Heart left ventricle (tissue), 16 donors: ENCODE measurements at regions of chr22 and their contacts with region 1.

Region 1: DNA sequence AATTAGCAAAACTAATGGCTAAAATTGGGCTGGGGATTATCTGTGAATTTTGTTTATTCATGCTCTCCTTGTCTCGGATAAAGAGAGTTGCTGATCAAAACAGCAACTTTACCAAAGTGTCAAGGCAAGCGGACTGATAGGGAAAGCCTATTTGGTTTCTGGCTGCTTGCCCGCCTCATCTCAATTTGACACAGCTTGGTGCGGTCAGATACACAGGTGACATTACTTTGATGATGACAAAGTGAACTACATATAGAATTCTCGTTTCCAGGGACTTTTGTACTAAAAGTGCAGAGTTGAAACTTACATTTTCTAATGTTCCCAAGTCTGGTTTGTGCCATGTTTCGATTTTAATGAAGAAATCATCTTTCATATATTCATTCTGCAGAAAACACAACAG is 22.8 kb downstream of the PITPNB start:
- DNase-seq: peak in 1 of 5 donors; percentile 42
- ATAC-seq: peak in 1 of 4 donors; percentile 53
- H3K4me3 ChIP-seq: no peak overlapping the region
- H3K27ac ChIP-seq: peak overlapping the region in 1 of 12 donors; percentile 30
- H3K4me1 ChIP-seq: peaks cover 0 to 45% (median 7%) of the 10 kb centered on the region in 12 donors
- H3K27me3 ChIP-seq: no peaks in the 10 kb centered on the region
- CTCF ChIP-seq: no peak
- POLR2A ChIP-seq: no peak

Region 2: DNA sequence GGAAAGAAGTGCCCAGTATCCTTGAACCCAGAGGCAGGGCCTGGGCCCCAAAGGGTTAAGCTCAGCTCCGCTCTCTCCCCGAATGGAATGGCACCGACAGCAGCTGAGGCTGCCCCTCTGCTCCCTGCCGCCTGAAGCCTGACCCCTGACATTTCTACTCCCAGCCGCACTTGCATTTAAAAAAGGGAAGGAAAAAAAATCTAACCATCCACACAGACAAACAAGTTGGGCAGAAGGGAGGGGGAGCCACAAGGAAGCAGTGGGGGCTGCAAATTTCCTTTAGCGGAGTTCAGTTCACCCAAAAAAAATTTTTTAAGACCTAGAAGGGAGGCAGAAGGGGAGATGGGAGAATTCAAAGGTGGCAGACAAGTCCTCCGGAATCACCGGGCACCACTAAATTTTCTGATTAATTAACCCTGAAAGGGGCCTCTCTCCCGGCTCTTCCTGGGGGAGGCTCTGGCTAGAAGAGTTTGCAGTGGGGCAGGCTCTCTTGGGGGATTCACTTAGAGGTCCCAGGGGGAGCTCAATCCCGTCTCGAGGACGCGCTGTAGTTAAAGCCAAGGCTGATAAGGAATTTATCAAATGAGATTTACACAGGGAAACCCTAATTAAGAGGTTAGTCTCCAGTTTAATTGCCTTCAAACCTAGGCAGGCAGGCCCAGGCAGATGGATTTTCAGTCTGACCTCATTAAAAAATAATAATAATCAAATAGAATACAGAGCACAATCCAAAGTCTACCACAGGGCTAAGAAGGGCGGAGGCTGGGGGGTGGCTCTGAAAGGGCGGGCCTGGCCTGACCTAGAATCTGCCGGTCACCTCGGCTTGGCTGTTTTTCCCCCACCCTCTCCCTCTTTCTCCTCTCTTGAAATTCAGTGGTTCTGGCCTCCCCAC is 120.2 kb before region 1 on chr22:
- intact Hi-C with region 1: no loop called
- DNase-seq: no peak
- ATAC-seq: peak in 3 of 4 donors; percentile 27 to 57 (median 51)
- H3K4me3 ChIP-seq: peak overlapping the region in 6 of 12 donors; percentile 4 to 37 (median 16)
- H3K27ac ChIP-seq: peak overlapping the region in 11 of 12 donors; percentile 7 to 69 (median 55)
- H3K4me1 ChIP-seq: peaks cover 0 to 57% (median 32%) of the 10 kb centered on the region in 12 donors
- H3K27me3 ChIP-seq: no peaks in the 10 kb centered on the region
- CTCF ChIP-seq: no peak
- POLR2A ChIP-seq: no peak

Region 3: GRCh38 chr22:27911330-27911729 is 15.1 kb after region 1 on chr22:
- intact Hi-C with region 1: loop called in 1 of 10 experiments (anchors 2 kb)
- DNase-seq: no peak
- ATAC-seq: no peak
- H3K4me3 ChIP-seq: no peak overlapping the region
- H3K27ac ChIP-seq: peak overlapping the region in 1 of 12 donors; percentile 74
- H3K4me1 ChIP-seq: peaks cover 0 to 59% (median 49%) of the 10 kb centered on the region in 12 donors
- H3K27me3 ChIP-seq: no peaks in the 10 kb centered on the region
- CTCF ChIP-seq: no peak
- POLR2A ChIP-seq: no peak

Region 4: DNA sequence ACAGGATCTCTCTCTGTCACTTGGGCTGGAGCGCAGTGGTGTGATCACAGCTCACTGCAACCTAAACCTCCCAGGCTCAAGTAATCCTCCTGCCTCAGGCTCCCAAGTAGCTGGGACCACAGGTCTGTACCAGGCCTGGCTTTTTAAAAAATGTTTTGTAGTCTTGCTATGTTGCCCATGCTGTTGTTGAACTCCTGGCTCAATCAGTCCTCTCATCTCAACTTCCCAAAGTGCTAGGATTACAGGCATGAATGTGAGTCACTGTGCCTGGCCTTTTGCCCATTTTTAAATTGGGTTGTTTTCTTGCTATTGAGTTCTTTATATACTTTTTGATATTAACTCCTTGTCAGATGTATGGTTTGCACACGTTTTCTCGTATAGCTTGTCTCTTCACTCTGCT is 55.8 kb after region 1 on chr22:
- intact Hi-C with region 1: no loop called
- DNase-seq: no peak
- ATAC-seq: no peak
- H3K4me3 ChIP-seq: no peak overlapping the region
- H3K27ac ChIP-seq: no peak overlapping the region
- H3K4me1 ChIP-seq: peaks cover 0 to 14% (median 0%) of the 10 kb centered on the region in 12 donors
- H3K27me3 ChIP-seq: no peaks in the 10 kb centered on the region
- CTCF ChIP-seq: no peak
- POLR2A ChIP-seq: no peak